ENCODE measurements at regions of chr15 and their contacts with region 1.

Region 1: GRCh38 chr15:89740137-89740536 is 10.9 kb downstream of the MESP1 start:
- DNase-seq: peak; percentile 41 to 84
- ATAC-seq: peak; percentile 78 to 93 (median 87)
- H3K4me3 ChIP-seq: no peak overlapping the region
- H3K4me3 Mint-ChIP-seq: no peak overlapping the region
- H3K27ac ChIP-seq: no peak overlapping the region
- H3K27ac Mint-ChIP-seq: no peak overlapping the region
- H3K4me1 ChIP-seq: peaks cover 3% of the 10 kb centered on the region
- H3K4me1 Mint-ChIP-seq: peaks cover 0 to 4% of the 10 kb centered on the region in 2 donors
- H3K27me3 ChIP-seq: no peaks in the 10 kb centered on the region
- H3K27me3 Mint-ChIP-seq: peaks cover 7 to 9% of the 10 kb centered on the region in 2 donors
- CTCF ChIP-seq: peak; percentile 95

Region 2: GRCh38 chr15:89750560-89751542 is 10.7 kb after region 1 on chr15 and contains the start of gene MESP1:
- intact Hi-C with region 1: loop called (anchors 1 kb)
- DNase-seq: peak; percentile 85 to 93
- ATAC-seq: peak; percentile 92 to 94 (median 93)
- H3K4me3 ChIP-seq: peak within 1 kb of the TSS; percentile 50
- H3K4me3 Mint-ChIP-seq: peak within 1 kb of the TSS; percentile 85
- H3K27ac ChIP-seq: no peak within 1 kb of the TSS
- H3K27ac Mint-ChIP-seq: peak within 1 kb of the TSS in 1 of 2 donors; percentile 58
- H3K4me1 ChIP-seq: peaks cover 17% of the 10 kb centered on the region
- H3K4me1 Mint-ChIP-seq: peaks cover 0 to 4% of the 10 kb centered on the region in 2 donors
- H3K27me3 ChIP-seq: peaks cover 2% of the 10 kb centered on the region
- H3K27me3 Mint-ChIP-seq: peaks cover 0 to 7% of the 10 kb centered on the region in 2 donors
- CTCF ChIP-seq: peak; percentile 75
- total RNA-seq, gene MESP1: 0.45 to 2.9 (median 2.5) TPM

Region 3: DNA sequence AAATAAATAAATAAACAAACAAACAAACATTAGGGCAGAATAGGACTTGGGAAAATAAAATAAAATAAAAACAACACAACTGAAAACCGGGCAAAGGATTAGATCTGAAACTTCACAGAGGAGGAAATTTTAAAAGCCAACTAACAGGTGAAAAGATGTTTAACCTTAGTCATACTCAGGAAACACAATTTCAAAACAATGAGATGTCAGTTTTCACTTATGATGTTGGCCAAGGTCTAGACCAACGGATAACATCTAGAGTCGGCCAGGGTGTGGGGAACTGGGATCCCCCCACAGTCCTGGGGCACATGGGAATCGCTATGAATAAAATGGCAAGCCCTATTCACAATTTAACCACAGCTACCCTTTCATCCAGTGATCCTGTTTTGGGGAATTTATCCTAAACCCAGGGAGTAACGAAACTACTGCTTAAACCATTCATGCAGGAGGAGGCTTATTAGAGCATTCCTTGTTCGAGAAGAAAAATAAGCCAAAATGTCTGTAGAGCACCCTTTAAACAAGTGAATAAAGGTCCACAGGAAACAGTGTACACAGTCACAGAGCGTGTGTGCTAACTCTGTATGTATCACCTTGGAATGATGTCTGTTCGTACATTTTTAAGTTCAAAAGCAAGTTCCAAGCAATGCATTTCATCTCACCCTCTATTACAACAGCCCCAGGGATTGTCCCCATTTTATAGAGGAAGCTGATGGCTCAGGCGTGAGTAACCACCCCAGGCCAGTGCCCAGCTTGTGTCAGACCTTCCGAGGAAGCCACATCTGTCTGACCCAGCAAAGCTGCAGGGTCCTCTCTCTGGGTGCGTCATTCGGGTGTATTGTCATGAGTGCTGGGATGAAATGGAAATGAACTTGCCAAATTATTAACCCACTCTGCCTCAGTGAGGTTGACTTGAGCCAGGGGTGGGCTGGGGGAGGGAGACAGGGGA is 80.8 kb after region 1 on chr15:
- intact Hi-C with region 1: no loop called
- DNase-seq: no peak
- ATAC-seq: peak in 2 of 3 donors; percentile 50 to 69
- H3K4me3 ChIP-seq: no peak overlapping the region
- H3K4me3 Mint-ChIP-seq: no peak overlapping the region
- H3K27ac ChIP-seq: no peak overlapping the region
- H3K27ac Mint-ChIP-seq: no peak overlapping the region
- H3K4me1 ChIP-seq: peaks cover 35% of the 10 kb centered on the region
- H3K4me1 Mint-ChIP-seq: no peaks in the 10 kb centered on the region
- H3K27me3 ChIP-seq: peaks cover 2% of the 10 kb centered on the region
- H3K27me3 Mint-ChIP-seq: peaks cover 15 to 22% of the 10 kb centered on the region in 2 donors
- CTCF ChIP-seq: no peak

Region 4: GRCh38 chr15:89874926-89875564 is 134.9 kb after region 1 on chr15:
- intact Hi-C with region 1: loop called (anchors 1 kb)
- DNase-seq: peak; percentile 72 to 89
- ATAC-seq: peak; percentile 98 to 100 (median 100)
- H3K4me3 ChIP-seq: no peak overlapping the region
- H3K4me3 Mint-ChIP-seq: no peak overlapping the region
- H3K27ac ChIP-seq: no peak overlapping the region
- H3K27ac Mint-ChIP-seq: no peak overlapping the region
- H3K4me1 ChIP-seq: peaks cover 3% of the 10 kb centered on the region
- H3K4me1 Mint-ChIP-seq: peaks cover 4 to 5% of the 10 kb centered on the region in 2 donors
- H3K27me3 ChIP-seq: no peaks in the 10 kb centered on the region
- H3K27me3 Mint-ChIP-seq: no peaks in the 10 kb centered on the region
- CTCF ChIP-seq: peak; percentile 97

Region 5: GRCh38 chr15:90086868-90087268 is 346.7 kb after region 1 on chr15:
- intact Hi-C with region 1: loop called (anchors 2 kb)
- DNase-seq: peak; percentile 44 to 70
- ATAC-seq: peak; percentile 76 to 92 (median 83)
- H3K4me3 ChIP-seq: no peak overlapping the region
- H3K4me3 Mint-ChIP-seq: no peak overlapping the region
- H3K27ac ChIP-seq: no peak overlapping the region
- H3K27ac Mint-ChIP-seq: peak overlapping the region; percentile 58 to 75
- H3K4me1 ChIP-seq: peaks cover 5% of the 10 kb centered on the region
- H3K4me1 Mint-ChIP-seq: peaks cover 8 to 15% of the 10 kb centered on the region in 2 donors
- H3K27me3 ChIP-seq: no peaks in the 10 kb centered on the region
- H3K27me3 Mint-ChIP-seq: no peaks in the 10 kb centered on the region
- CTCF ChIP-seq: peak; percentile 69